ENCODE measurements at regions of chr17 and their contacts with region 1.

Region 1: DNA sequence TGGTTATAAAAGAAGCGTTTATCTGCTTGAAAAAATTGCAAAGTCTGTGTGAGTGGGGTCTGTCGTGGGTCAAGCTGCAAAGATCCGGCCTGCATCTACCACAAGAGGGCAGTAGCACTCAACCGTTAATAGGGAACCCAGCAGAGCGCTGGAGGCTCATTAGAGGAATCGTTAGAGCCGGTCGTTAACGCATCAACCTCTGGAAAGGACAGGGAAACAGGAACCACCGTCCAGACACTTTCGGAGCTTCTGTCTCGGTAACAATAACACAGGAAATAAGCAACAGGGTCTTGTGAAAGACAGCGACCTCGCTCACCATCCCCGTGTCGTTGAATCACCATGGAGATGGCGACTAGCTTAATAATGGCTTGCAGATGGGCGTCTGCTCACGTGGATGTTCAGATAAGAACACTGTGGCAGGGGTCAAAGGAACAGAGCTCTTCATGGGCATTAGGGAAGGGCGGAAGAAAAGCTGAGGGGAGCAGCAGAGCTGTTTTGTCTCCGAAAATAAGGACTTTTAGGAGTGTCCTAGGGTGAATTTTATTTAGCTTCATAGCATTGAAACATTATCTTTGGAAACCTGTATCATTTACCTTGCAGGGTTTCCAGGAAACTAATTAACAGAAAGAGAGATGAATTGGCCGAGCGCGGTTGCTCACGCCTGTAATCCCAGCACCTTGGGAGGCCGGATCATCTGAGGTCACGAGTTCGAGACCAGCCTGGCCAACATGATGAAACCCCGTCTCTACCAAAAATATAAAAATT is 11.9 kb upstream of the NSRP1 start:
- DNase-seq: peak; percentile 46
- ATAC-seq: peak; percentile 100
- H3K4me3 ChIP-seq: peak overlapping the region; percentile 60; the same call in 1 of the 2 replicates
- H3K27ac ChIP-seq: no peak overlapping the region
- H3K4me1 ChIP-seq: 0 out of 2 replicates have a peak, but pooled peaks cover 3% of the 10 kb centered on the region
- H3K27me3 ChIP-seq: no peaks in the 10 kb centered on the region
- CTCF ChIP-seq: peak; percentile 87 to 90 (median 88); a peak in 5 of 6 replicates
- EP300 ChIP-seq: no peak
- POLR2A ChIP-seq: no peak
- RAD21 ChIP-seq: peak; percentile 88

Region 2: DNA sequence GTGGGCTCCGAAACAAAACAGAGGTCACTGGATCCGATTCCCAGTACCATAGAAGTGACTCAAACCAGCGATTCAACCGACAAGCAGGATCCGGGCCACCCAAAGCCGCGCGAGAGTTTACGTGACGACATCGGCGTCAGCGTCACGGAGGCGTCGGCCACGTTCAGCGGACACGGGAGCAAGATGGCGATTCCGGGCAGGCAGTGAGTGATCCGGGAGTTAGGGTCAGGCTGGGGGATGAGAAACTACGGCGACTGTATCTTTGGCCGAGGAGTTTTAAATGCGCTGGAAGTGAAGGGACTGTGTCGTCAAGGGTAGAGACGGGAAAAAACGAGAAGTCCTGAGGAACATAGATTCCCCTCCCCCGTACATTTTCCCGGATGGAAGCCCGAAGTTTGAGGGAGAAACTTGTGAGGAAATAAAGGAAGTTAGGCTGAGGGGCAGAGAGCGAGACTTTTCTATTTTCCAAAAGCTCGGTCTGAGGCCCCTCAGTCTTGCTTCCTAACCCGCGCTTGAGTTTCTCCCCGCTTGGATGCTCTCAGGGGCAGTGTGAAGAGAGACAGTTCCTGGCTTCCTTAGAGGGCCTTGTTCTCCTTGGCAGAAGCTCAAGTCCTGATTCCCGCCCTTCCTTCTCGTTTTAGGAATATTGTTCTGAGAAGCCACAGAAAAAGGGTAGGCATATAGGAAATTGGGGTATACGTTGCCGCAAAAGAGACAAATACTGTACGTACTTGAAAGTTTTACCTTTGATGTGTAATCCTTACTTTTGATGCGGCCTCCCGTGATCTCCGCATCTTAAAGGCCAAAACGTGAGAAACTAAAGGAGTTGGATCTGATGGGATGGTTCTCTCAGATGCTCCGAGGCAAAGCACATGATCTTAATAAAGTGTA is 12.1 kb after region 1 on chr17 and contains the start of gene NSRP1:
- CTCF ChIA-PET with region 1: interaction called, 65 read pairs
- POLR2A ChIA-PET with region 1: interaction called, 5 read pairs
- RAD21 ChIA-PET with region 1: interaction called, 19 read pairs
- SMC1A ChIA-PET with region 1: interaction called, 43 read pairs
- in situ Hi-C with region 1: no loop called
- intact Hi-C with region 1: no loop called
- DNase-seq: peak; percentile 89
- ATAC-seq: peak; percentile 91
- H3K4me3 ChIP-seq: peak within 1 kb of the TSS; percentile 95
- H3K27ac ChIP-seq: peak within 1 kb of the TSS; percentile 94
- H3K4me1 ChIP-seq: peaks cover 9% of the 10 kb centered on the region
- H3K27me3 ChIP-seq: no peaks in the 10 kb centered on the region
- CTCF ChIP-seq: no peak
- EP300 ChIP-seq: no peak
- POLR2A ChIP-seq: peak; percentile 100
- RAD21 ChIP-seq: no peak
- polyA plus RNA-seq, gene NSRP1: 57.2 to 69.7 TPM

Region 3: GRCh38 chr17:30173649-30174048 is 68.9 kb after region 1 on chr17:
- CTCF ChIA-PET with region 1: interaction called, 5 read pairs
- POLR2A ChIA-PET with region 1: interaction called, 3 read pairs
- RAD21 ChIA-PET with region 1: interaction called, 5 read pairs
- SMC1A ChIA-PET with region 1: interaction called, 15 read pairs
- in situ Hi-C with region 1: no loop called
- intact Hi-C with region 1: no loop called
- DNase-seq: peak; percentile 68
- ATAC-seq: peak; percentile 98
- H3K4me3 ChIP-seq: no peak overlapping the region
- H3K27ac ChIP-seq: peak overlapping the region; percentile 33; the same call in 1 of the 2 replicates
- H3K4me1 ChIP-seq: peaks cover 33% of the 10 kb centered on the region
- H3K27me3 ChIP-seq: no peaks in the 10 kb centered on the region
- CTCF ChIP-seq: no peak
- EP300 ChIP-seq: peak; percentile 67 to 93
- POLR2A ChIP-seq: no peak
- RAD21 ChIP-seq: no peak

Region 4: DNA sequence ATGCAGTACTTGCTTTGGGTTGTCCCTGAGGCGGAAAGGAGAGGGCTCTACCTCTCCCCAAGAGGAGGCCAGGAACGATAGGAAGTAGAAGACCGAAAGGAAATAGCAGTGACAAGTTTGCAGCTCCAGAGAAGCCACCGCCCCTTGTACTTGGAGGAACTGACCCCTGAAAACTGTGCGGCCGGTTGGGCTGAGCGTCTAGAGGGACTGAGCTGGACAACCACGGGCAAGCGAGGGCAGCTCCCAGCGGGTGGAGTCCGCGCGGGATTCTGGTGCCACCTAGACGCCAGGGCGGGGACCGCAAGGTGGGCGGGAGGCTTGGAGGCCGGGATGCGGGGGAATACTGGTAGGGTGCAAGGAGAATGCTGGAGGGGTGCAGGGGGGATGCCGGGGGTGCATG is 132.0 kb after region 1 on chr17:
- CTCF ChIA-PET with region 1: interaction called, 127 read pairs
- POLR2A ChIA-PET with region 1: interaction called, 4 read pairs
- RAD21 ChIA-PET with region 1: interaction called, 52 read pairs
- SMC1A ChIA-PET with region 1: interaction called, 47 read pairs
- in situ Hi-C with region 1: no loop called
- intact Hi-C with region 1: loop called (anchors 1 kb)
- DNase-seq: no peak
- ATAC-seq: peak; percentile 75
- H3K4me3 ChIP-seq: no peak overlapping the region
- H3K27ac ChIP-seq: no peak overlapping the region
- H3K4me1 ChIP-seq: peaks cover 29% of the 10 kb centered on the region
- H3K27me3 ChIP-seq: no peaks in the 10 kb centered on the region
- CTCF ChIP-seq: peak; percentile 38 to 70 (median 65)
- EP300 ChIP-seq: no peak
- POLR2A ChIP-seq: no peak
- RAD21 ChIP-seq: peak; percentile 80

Region 5: GRCh38 chr17:30278032-30278431 is 173.3 kb after region 1 on chr17:
- CTCF ChIA-PET with region 1: interaction called, 27 read pairs
- POLR2A ChIA-PET with region 1: no interaction called
- RAD21 ChIA-PET with region 1: interaction called, 16 read pairs
- SMC1A ChIA-PET with region 1: interaction called, 10 read pairs
- in situ Hi-C with region 1: no loop called
- intact Hi-C with region 1: loop called (anchors 1 kb)
- DNase-seq: no peak
- ATAC-seq: peak; percentile 52; the same call in 2 of the 3 replicates
- H3K4me3 ChIP-seq: no peak overlapping the region
- H3K27ac ChIP-seq: no peak overlapping the region
- H3K4me1 ChIP-seq: no peaks in the 10 kb centered on the region; the same call in 1 of the 2 replicates
- H3K27me3 ChIP-seq: no peaks in the 10 kb centered on the region
- CTCF ChIP-seq: peak; percentile 36 to 53 (median 38); a peak in 5 of 6 replicates
- EP300 ChIP-seq: no peak
- POLR2A ChIP-seq: no peak
- RAD21 ChIP-seq: peak; percentile 69

Region 6: DNA sequence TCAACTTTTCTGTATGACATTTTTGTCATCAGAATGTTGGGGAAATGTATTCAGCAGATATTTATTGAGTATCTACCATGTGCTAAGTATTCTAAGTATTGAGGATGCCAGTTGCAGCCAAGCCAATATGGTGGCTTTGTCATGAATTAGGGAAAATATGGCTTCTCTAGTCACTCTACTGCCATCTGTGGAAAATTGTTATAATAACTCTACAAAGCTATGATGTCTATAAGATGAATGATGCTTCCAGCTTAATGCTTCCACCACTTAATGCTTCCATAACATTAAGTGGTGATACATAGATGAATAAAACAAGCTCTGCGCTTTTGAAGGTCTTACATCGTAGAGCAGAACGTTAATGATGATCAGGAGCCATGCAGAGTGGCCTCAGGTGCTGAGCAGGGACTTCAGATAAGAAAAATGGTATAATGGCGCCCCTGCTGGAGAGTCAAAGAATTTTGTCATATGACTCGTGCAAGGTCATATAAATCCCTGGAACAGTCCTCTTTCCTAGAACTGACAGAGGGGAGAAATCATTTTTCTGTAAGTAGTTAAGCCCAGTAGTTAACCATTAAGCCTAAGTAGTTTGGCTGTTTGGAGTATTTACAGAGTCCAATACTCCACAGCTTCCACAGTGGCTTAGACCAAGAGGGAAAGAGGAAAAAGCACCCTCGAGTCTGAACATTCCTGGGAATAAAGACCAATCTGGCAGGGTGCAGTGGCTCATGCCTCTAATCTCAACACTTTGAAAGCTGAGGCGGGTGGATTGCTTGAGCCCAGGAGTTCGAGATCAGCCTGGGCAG is 231.8 kb after region 1 on chr17:
- CTCF ChIA-PET with region 1: interaction called, 345 read pairs
- POLR2A ChIA-PET with region 1: interaction called, 6 read pairs
- RAD21 ChIA-PET with region 1: interaction called, 183 read pairs
- SMC1A ChIA-PET with region 1: interaction called, 122 read pairs
- in situ Hi-C with region 1: loop called (anchors 5 kb)
- intact Hi-C with region 1: loop called (anchors 1 kb)
- DNase-seq: no peak
- ATAC-seq: peak; percentile 58
- H3K4me3 ChIP-seq: no peak overlapping the region
- H3K27ac ChIP-seq: no peak overlapping the region
- H3K4me1 ChIP-seq: peaks cover 12% of the 10 kb centered on the region
- H3K27me3 ChIP-seq: no peaks in the 10 kb centered on the region
- CTCF ChIP-seq: peak; percentile 57 to 86 (median 63); a peak in 5 of 6 replicates
- EP300 ChIP-seq: no peak
- POLR2A ChIP-seq: no peak
- RAD21 ChIP-seq: peak; percentile 78